ENCODE measurements at regions of chr19 and their contacts with region 1.

Region 1: DNA sequence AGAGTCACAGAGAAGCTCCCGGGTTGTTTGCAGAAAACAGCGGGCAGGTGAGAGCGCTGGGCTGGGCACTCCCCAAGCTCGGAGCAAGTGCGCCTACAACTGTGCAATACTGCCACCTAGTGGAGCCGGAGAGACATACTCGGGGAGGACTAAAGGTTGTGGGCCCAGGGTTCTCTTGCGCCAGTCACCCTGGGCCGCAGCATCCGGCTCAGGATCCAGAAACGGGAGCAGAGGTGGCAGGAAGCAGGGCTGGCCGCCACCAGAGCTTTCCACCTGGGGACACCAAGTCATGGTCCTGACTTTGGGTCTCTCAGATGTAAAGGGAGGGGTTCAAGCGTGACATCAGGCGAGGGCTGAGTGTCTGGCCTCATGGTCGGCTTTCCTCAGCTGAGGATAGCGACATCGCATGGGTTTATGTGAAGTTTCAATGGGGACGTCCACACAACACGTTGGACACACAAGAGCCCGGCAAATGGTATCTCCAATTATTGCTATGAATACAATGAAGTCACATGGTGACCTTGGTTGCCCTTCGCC is 11.2 kb upstream of the KLK4 start:
- DNase-seq: peak; percentile 88
- H3K4me3 ChIP-seq: no peak overlapping the region
- H3K27ac ChIP-seq: no peak overlapping the region
- H3K4me1 ChIP-seq: peaks cover 11% of the 10 kb centered on the region
- H3K27me3 ChIP-seq: peaks cover 12% of the 10 kb centered on the region
- CTCF ChIP-seq: peak; percentile 92

Region 2: DNA sequence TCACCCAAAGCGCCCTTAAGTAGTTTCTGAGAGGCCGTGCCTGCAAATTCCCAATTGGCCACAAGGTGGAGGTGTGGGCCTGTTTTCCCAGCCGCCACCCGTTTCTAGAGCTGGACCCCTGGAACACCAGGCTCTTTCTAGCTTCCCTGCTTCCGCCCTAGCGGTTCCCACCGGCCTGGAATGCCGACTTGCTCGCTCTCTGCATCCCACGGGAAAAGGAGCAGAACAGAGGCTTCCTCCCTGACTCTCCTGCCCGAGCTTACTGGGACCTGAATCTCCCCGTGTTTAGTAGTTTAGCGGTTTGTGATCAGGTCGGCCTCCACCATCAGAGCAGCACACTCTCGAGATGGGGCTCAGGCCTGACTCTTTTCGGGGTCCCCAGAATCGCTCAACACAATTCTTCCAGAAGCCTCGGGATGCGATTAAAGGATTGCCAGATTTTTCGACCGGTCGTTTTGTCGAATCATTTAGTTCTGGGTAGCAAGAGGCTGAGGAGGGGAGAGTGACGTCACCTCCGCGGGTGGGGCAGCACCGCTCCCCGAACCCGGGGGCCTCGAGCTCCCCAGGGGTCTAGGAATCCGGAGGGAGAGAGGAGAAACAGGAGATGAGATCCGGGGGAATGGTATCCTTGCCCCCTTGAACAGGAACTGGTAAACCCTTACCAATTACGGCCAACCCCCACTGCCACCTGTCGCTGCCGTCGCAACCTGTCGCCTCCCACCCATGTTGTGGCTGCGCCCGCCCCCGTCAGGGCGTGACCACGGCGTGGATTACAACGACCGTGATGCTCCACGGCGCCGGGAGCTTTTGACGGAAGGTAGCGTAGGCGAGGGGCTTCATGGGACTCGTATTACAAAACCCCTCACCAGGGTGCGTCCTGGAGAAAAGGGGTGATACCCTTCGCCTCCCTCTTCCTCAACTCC is 564.9 kb before region 1 on chr19:
- CTCF ChIA-PET with region 1: interaction called, 4 read pairs
- POLR2A ChIA-PET with region 1: no interaction called
- intact Hi-C with region 1: loop called (anchors 10 kb)
- DNase-seq: peak; percentile 89
- H3K4me3 ChIP-seq: peak overlapping the region; percentile 65
- H3K27ac ChIP-seq: peak overlapping the region; percentile 85
- H3K4me1 ChIP-seq: no peaks in the 10 kb centered on the region
- H3K27me3 ChIP-seq: no peaks in the 10 kb centered on the region
- CTCF ChIP-seq: peak; percentile 87

Region 3: GRCh38 chr19:50537762-50538230 is 384.6 kb before region 1 on chr19:
- CTCF ChIA-PET with region 1: no interaction called
- POLR2A ChIA-PET with region 1: no interaction called
- intact Hi-C with region 1: loop called (anchors 5 kb)
- DNase-seq: peak; percentile 90
- H3K4me3 ChIP-seq: no peak overlapping the region
- H3K27ac ChIP-seq: no peak overlapping the region
- H3K4me1 ChIP-seq: no peaks in the 10 kb centered on the region
- H3K27me3 ChIP-seq: no peaks in the 10 kb centered on the region
- CTCF ChIP-seq: peak; percentile 95

Region 4: GRCh38 chr19:50705422-50706019 is 216.9 kb before region 1 on chr19:
- CTCF ChIA-PET with region 1: interaction called, 15 read pairs
- POLR2A ChIA-PET with region 1: no interaction called
- intact Hi-C with region 1: loop called (anchors 1 kb)
- DNase-seq: peak; percentile 92
- H3K4me3 ChIP-seq: no peak overlapping the region
- H3K27ac ChIP-seq: no peak overlapping the region
- H3K4me1 ChIP-seq: peaks cover 14% of the 10 kb centered on the region
- H3K27me3 ChIP-seq: no peaks in the 10 kb centered on the region
- CTCF ChIP-seq: peak; percentile 88

Region 5: GRCh38 chr19:50724522-50725217 is 197.7 kb before region 1 on chr19:
- CTCF ChIA-PET with region 1: interaction called, 4 read pairs
- POLR2A ChIA-PET with region 1: interaction called, 26 read pairs
- intact Hi-C with region 1: no loop called
- DNase-seq: peak; percentile 100
- H3K4me3 ChIP-seq: peak overlapping the region; percentile 61
- H3K27ac ChIP-seq: peak overlapping the region; percentile 85
- H3K4me1 ChIP-seq: peaks cover 71% of the 10 kb centered on the region
- H3K27me3 ChIP-seq: no peaks in the 10 kb centered on the region
- CTCF ChIP-seq: peak; percentile 93

Region 6: DNA sequence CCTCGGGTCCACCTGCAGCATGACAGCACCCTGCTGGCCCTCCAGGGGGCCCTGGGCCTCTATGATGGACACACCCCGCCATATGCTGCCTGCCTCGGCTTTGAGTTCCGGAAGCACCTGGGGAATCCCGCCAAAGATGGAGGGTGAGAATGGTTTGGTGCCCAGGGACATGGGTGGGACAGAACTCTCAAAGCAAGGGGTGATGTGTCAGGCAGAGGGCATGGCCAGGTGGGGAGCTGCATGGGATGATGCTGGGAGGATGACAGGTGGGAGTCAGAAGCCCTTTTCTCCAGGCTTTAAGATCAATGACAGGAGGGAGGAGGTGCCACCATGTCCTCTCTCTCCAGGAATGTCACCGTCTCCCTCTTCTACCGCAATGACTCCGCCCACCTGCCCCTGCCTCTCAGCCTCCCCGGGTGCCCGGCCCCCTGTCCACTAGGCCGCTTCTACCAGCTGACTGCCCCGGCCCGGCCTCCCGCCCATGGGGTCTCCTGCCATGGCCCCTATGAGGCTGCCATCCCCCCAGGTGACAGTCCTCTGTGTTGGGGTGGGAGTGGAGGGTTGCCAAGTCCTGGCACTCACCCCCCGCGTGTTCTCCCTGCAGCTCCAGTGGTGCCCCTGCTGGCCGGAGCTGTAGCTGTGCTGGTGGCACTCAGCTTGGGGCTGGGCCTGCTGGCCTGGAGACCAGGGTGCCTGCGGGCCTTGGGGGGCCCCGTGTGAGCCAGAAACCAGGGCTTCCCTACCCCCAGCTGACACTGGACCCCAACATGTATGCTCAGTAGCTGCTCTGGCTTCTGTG is 127.7 kb before region 1 on chr19:
- CTCF ChIA-PET with region 1: no interaction called
- POLR2A ChIA-PET with region 1: no interaction called
- intact Hi-C with region 1: loop called (anchors 5 kb)
- DNase-seq: peak; percentile 69
- H3K4me3 ChIP-seq: no peak overlapping the region
- H3K27ac ChIP-seq: peak overlapping the region; percentile 5
- H3K4me1 ChIP-seq: peaks cover 16% of the 10 kb centered on the region
- H3K27me3 ChIP-seq: no peaks in the 10 kb centered on the region
- CTCF ChIP-seq: peak; percentile 58

Region 7: GRCh38 chr19:51097166-51097738 is 174.9 kb after region 1 on chr19:
- CTCF ChIA-PET with region 1: no interaction called
- POLR2A ChIA-PET with region 1: no interaction called
- intact Hi-C with region 1: loop called (anchors 10 kb)
- DNase-seq: peak; percentile 52
- H3K4me3 ChIP-seq: no peak overlapping the region
- H3K27ac ChIP-seq: no peak overlapping the region
- H3K4me1 ChIP-seq: no peaks in the 10 kb centered on the region
- H3K27me3 ChIP-seq: no peaks in the 10 kb centered on the region
- CTCF ChIP-seq: peak; percentile 68

Measured in A673 (cell line).